Natural killer cell (primary cell): ENCODE measurements at regions of chr15 and their contacts with region 1.

Region 1: DNA sequence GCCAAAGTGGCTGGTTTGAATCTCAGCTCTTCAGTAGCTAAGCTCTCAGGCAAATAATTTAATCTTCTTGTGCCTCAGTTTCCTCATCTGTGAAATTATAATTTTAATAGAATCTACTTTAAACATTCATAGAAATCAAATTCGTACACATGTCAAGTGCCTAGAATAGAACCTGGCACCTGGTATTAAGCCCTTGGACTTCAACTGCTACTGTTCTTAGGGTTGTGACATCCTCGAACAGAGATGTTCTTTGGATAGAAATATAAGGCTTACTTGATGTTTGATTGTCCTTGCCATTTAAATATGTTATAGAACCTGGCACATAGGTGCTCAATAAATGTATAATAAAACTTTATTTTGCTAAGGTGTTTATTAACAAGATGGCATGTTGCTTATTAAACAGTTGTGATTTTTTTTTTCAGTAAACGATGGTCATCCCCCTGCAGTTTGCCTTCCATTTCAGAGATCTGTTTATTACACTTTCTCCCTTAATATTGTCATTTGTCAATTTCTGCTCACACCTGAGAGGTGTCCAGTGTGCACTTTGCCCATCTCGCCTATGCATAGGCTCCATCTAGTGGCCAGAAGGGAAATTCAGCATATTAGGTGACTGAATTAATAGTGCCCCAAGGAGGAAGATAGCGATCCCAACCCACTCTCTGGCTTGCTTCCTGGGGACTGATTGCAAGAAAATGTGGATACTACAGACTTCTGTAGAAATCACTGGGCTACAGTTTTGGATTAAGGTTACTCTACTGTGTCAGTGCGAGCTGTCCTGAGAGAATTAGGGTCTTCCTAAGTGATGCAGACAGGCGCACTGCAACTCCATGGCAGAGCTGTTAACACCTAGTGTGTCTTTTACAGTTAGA is 10.7 kb downstream of the IGF1R start:
- DNase-seq: peak in 1 of 2 donors; percentile 75
- ATAC-seq: peak; percentile 76 to 88 (median 87)
- H3K4me3 ChIP-seq: no peak overlapping the region
- H3K4me3 Mint-ChIP-seq: no peak overlapping the region
- H3K27ac ChIP-seq: no peak overlapping the region
- H3K27ac Mint-ChIP-seq: no peak overlapping the region
- H3K4me1 ChIP-seq: no peaks in the 10 kb centered on the region
- H3K4me1 Mint-ChIP-seq: peaks cover 18 to 25% of the 10 kb centered on the region in 2 donors
- H3K27me3 ChIP-seq: peaks cover 2% of the 10 kb centered on the region
- H3K27me3 Mint-ChIP-seq: peaks cover 6 to 17% of the 10 kb centered on the region in 2 donors
- CTCF ChIP-seq: peak; percentile 91

Region 2: DNA sequence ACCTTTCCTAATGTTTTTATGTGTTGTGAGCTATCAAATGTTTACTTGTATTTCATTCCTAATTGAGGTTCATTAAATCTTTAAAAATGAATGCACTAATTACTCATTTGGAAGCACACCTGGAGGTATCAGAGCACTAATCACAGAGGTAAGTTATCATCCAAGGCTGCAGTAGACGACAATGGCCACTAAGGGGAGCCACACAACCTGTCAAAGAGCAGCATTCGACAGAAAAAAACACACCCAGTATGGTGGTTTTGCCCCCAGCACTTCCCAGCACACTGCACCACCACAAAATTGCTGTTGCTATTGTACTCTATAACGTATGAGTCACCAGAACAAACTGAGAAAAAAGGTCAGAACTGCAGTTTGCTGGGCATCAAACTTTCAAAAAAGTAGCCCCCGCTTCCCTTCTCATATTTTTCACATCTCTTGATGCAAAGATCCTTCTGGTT is 216.7 kb before region 1 on chr15:
- intact Hi-C with region 1: loop called (anchors 2 kb)
- DNase-seq: peak; percentile 25 to 69
- ATAC-seq: peak; percentile 73 to 86 (median 78)
- H3K4me3 ChIP-seq: no peak overlapping the region
- H3K4me3 Mint-ChIP-seq: no peak overlapping the region
- H3K27ac ChIP-seq: no peak overlapping the region
- H3K27ac Mint-ChIP-seq: no peak overlapping the region
- H3K4me1 ChIP-seq: no peaks in the 10 kb centered on the region
- H3K4me1 Mint-ChIP-seq: peaks cover 7 to 11% of the 10 kb centered on the region in 2 donors
- H3K27me3 ChIP-seq: no peaks in the 10 kb centered on the region
- H3K27me3 Mint-ChIP-seq: peaks cover 6% of the 10 kb centered on the region in 2 donors
- CTCF ChIP-seq: peak; percentile 70

Region 3: DNA sequence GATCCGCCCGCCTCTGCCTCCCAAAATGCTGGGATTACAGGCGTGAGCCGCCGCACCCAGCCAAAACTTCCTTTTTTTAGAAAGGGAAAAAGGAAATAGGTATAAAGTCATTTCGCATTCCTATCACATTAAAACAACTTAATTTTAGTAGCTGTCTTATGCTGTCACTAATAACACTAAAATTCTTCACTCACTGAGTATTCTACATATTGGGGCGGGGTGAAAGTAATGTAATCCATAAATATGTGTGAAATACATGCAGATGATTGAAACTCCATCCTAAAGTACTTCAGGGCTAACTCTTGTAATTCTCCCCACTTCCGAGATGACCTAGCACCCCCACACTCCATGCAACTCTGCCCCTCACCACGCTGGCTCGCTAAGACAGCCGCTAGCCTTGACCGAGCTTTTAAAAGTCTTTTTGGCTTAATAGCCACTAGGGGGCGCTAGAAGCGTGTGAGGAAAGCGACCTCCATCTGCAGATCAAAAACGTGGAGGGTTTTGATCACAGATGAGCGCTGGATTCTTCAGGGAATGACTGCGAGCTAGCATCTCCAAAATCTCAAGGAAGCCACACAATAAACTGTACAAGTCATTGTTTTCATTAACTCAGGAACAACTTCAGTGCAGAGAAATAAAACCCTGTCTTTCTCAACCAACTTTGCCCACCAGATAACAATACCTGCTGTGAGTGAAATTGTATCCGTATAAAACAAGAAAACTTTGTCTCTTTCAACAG is 140.1 kb before region 1 on chr15:
- intact Hi-C with region 1: loop called (anchors 1 kb)
- DNase-seq: peak; percentile 22 to 85
- ATAC-seq: peak; percentile 75 to 84 (median 81)
- H3K4me3 ChIP-seq: no peak overlapping the region
- H3K4me3 Mint-ChIP-seq: no peak overlapping the region
- H3K27ac ChIP-seq: no peak overlapping the region
- H3K27ac Mint-ChIP-seq: no peak overlapping the region
- H3K4me1 ChIP-seq: peaks cover 4% of the 10 kb centered on the region
- H3K4me1 Mint-ChIP-seq: peaks cover 5 to 6% of the 10 kb centered on the region in 2 donors
- H3K27me3 ChIP-seq: no peaks in the 10 kb centered on the region
- H3K27me3 Mint-ChIP-seq: peaks cover 0 to 7% of the 10 kb centered on the region in 2 donors
- CTCF ChIP-seq: peak; percentile 66

Region 4: GRCh38 chr15:98581715-98582114 is 77.3 kb before region 1 on chr15:
- intact Hi-C with region 1: loop called (anchors 5 kb)
- DNase-seq: peak in 1 of 2 donors; percentile 45
- ATAC-seq: no peak
- H3K4me3 ChIP-seq: no peak overlapping the region
- H3K4me3 Mint-ChIP-seq: no peak overlapping the region
- H3K27ac ChIP-seq: no peak overlapping the region
- H3K27ac Mint-ChIP-seq: no peak overlapping the region
- H3K4me1 ChIP-seq: no peaks in the 10 kb centered on the region
- H3K4me1 Mint-ChIP-seq: no peaks in the 10 kb centered on the region
- H3K27me3 ChIP-seq: peaks cover 18% of the 10 kb centered on the region
- H3K27me3 Mint-ChIP-seq: peaks cover 30 to 57% of the 10 kb centered on the region in 2 donors
- CTCF ChIP-seq: no peak

Region 5: GRCh38 chr15:98597666-98598065 is 61.4 kb before region 1 on chr15:
- intact Hi-C with region 1: no loop called
- DNase-seq: no peak
- ATAC-seq: no peak
- H3K4me3 ChIP-seq: no peak overlapping the region
- H3K4me3 Mint-ChIP-seq: no peak overlapping the region
- H3K27ac ChIP-seq: no peak overlapping the region
- H3K27ac Mint-ChIP-seq: no peak overlapping the region
- H3K4me1 ChIP-seq: peaks cover 6% of the 10 kb centered on the region
- H3K4me1 Mint-ChIP-seq: peaks cover 15% of the 10 kb centered on the region in 2 donors
- H3K27me3 ChIP-seq: peaks cover 2% of the 10 kb centered on the region
- H3K27me3 Mint-ChIP-seq: peaks cover 4 to 7% of the 10 kb centered on the region in 2 donors
- CTCF ChIP-seq: no peak

Region 6: GRCh38 chr15:98620020-98620419 is 39.0 kb before region 1 on chr15:
- intact Hi-C with region 1: loop called (anchors 1 kb)
- DNase-seq: no peak
- ATAC-seq: no peak
- H3K4me3 ChIP-seq: no peak overlapping the region
- H3K4me3 Mint-ChIP-seq: no peak overlapping the region
- H3K27ac ChIP-seq: no peak overlapping the region
- H3K27ac Mint-ChIP-seq: no peak overlapping the region
- H3K4me1 ChIP-seq: no peaks in the 10 kb centered on the region
- H3K4me1 Mint-ChIP-seq: no peaks in the 10 kb centered on the region
- H3K27me3 ChIP-seq: peaks cover 36% of the 10 kb centered on the region
- H3K27me3 Mint-ChIP-seq: peaks cover 53 to 62% of the 10 kb centered on the region in 2 donors
- CTCF ChIP-seq: no peak